ENCODE measurements at regions of chr14 and their contacts with region 1.

Region 1: DNA sequence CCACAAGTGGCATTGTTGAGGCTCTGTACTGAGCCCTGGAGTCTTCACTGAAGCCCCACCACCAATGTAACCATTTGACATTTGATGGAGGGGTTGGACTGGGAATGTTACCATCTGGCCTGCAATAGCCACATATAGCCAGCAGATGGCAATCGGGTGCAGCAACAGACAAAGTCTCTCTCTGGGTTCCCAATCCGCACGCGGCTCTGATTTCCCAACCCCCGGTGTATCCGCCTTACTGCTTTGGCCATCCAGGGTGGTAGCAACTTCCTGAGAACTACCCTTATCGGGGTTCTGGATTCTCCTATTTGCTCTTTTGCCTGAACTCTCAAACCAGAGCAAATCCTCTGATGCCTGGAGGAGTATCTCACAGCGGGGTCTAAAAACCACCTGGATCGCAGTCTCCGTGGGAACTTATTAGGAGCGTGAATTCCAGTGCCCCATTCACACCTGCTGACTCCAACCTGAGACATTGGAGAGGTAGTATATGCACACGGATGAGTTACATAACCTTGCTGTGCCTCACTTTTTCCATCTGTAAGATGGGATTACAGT is 14.2 kb downstream of the VRTN start:
- DNase-seq: peak; percentile 88
- H3K4me3 ChIP-seq: no peak overlapping the region
- H3K27ac ChIP-seq: no peak overlapping the region
- H3K4me1 ChIP-seq: no peaks in the 10 kb centered on the region
- H3K27me3 ChIP-seq: peaks cover 0 to 26% of the 10 kb centered on the region in 2 donors
- CTCF ChIP-seq: peak; percentile 95 to 96

Region 2: GRCh38 chr14:74483321-74483720 is 120.9 kb after region 1 on chr14:
- intact Hi-C with region 1: loop called (anchors 5 kb)
- DNase-seq: no peak
- H3K4me3 ChIP-seq: no peak overlapping the region
- H3K27ac ChIP-seq: no peak overlapping the region
- H3K4me1 ChIP-seq: peaks cover 0 to 14% (median 0%) of the 10 kb centered on the region in 4 donors
- H3K27me3 ChIP-seq: no peaks in the 10 kb centered on the region
- CTCF ChIP-seq: no peak

Region 3: DNA sequence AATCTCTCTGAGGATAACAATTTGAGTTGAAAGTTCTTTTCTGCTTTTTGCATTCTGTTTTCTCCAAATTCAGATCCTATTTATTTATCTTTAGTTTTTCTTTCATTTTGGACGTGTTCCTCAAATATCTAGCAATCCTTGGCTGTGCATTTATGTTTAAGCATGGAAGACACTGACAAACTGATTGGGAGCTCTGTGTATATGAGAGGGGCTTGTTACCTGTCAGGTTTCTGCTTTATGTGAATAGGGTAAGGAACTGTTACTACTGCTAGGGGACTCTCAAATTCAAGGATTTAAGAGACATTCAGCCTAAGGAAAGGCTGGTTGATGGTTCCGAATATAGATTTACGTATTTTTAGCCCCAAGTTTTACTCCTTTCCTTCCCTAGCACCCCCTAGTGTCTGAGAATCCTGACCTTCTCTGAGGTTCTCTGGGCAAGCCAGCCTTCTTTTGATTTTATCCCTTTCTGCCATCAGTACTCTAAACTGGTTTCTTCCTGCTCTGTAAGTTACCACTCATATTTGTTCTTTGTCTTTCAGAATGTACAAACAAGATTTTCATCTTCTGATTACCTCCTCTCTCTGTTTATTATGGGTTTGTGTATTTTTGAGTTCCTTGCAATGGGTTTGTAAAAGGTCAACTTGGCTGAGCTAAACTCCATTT is 431.2 kb after region 1 on chr14:
- intact Hi-C with region 1: loop called (anchors 10 kb)
- DNase-seq: no peak
- H3K4me3 ChIP-seq: peak overlapping the region in 1 of 2 donors; percentile 4
- H3K27ac ChIP-seq: peak overlapping the region in 1 of 2 donors; percentile 28
- H3K4me1 ChIP-seq: peaks cover 0 to 22% (median 10%) of the 10 kb centered on the region in 4 donors
- H3K27me3 ChIP-seq: no peaks in the 10 kb centered on the region
- CTCF ChIP-seq: peak; percentile 39

Measured in tibial artery (tissue), 4 donors.